AG04450 (cell line): ENCODE measurements at regions of chr1 and their contacts with region 1.

Region 1: DNA sequence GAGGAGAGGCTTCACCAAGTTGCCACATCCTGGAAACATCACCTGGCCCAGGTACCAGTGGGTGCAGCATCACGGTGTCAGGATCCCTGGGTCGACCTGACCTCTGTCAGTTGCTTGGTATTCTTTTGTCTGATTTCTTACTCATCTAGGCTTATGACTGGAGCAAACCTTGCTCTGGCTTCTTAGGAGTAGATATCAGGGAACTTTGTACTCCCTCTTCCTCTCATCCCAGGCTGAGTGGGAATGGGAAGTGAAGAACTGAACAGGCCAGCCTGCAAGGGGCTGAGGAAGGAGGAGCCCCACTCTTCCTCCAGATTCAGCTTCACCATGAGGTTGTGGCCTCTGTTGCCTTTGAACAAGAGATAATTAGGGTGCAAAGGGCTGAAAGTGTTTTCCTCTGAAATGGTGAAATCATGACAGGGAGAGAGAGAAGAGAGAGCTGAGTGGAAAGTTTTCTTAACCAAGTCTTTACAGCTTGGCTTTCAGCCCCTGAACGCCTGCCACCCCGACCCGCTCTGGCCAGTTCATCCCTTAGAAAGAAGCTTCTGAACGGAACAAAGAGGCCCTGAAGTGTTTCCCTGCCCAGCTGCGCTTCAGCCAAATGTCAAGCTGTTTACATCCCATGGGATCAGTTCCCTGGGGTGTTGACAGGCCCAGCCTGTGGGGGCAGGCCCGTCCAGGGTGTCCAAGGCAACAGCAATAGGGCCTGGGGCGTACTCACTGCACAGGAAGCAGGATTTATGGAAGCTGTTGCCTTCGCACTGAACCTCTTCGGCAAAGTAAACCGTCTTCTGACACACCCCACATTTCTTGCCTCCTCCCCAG is 11.2 kb downstream of the CSRP1 start:
- DNase-seq: no peak
- H3K4me3 ChIP-seq: peak overlapping the region; percentile 7; the same call in 1 of the 2 replicates
- H3K27ac ChIP-seq: peak overlapping the region; percentile 81
- H3K27me3 ChIP-seq: no peaks in the 10 kb centered on the region
- CTCF ChIP-seq: no peak

Region 2: DNA sequence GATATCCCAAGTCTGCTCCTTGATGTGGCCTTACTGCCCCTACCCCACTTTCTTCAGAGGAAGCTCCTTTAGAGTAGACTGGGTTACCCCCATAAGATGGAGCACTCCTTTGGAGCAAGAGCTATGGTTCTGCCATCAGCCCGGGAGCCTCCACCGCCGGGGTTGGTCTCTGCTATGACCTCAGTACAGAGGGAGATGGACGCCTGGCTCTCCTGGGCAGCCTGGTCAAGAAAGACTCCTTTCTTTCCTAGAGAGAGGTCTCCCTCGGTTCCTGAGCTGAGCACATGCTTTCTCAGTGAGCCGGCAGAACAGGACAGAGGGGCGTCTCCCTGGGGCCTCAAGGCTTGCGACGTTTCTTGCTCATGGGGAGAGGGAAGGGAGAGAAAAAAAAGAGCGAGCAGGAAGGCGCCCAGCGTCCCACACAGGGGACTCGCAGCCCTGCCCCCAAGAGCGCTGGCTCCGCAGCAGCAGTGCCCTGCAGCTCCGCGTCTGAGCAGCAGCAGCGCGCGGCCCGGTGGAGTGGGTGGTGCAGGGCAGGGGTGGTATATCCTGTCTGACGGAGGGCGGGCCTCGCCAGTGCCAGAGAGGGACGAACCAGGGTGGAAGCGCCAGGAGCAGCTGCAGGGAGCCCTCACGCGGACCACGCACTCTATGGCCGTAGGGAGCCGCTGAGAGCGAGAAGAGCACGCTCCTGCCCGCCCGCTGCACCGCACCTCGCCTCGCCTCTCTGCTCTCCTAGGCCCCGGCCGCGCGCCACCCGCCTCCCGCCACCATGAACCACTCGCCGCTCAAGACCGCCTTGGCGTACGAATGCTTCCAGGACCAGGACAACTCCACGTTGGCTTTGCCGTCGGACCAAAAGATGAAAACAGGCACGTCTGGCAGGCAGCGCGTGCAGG is 212.5 kb before region 1 on chr1 and contains the start of gene PKP1:
- CTCF ChIA-PET with region 1: no interaction called
- POLR2A ChIA-PET with region 1: no interaction called
- DNase-seq: no peak
- H3K4me3 ChIP-seq: peak within 1 kb of the TSS; percentile 37
- H3K27ac ChIP-seq: no peak within 1 kb of the TSS
- H3K27me3 ChIP-seq: peaks cover 52% of the 10 kb centered on the region
- CTCF ChIP-seq: no peak
- polyA plus RNA-seq, gene PKP1: 0.04 TPM in 2 replicates

Region 3: GRCh38 chr1:201476670-201477344 is 18.9 kb before region 1 on chr1:
- CTCF ChIA-PET with region 1: interaction called, 17 read pairs
- POLR2A ChIA-PET with region 1: interaction called, 10 read pairs
- DNase-seq: no peak
- H3K4me3 ChIP-seq: no peak overlapping the region
- H3K27ac ChIP-seq: no peak overlapping the region
- H3K27me3 ChIP-seq: no peaks in the 10 kb centered on the region
- CTCF ChIP-seq: no peak

Region 4: DNA sequence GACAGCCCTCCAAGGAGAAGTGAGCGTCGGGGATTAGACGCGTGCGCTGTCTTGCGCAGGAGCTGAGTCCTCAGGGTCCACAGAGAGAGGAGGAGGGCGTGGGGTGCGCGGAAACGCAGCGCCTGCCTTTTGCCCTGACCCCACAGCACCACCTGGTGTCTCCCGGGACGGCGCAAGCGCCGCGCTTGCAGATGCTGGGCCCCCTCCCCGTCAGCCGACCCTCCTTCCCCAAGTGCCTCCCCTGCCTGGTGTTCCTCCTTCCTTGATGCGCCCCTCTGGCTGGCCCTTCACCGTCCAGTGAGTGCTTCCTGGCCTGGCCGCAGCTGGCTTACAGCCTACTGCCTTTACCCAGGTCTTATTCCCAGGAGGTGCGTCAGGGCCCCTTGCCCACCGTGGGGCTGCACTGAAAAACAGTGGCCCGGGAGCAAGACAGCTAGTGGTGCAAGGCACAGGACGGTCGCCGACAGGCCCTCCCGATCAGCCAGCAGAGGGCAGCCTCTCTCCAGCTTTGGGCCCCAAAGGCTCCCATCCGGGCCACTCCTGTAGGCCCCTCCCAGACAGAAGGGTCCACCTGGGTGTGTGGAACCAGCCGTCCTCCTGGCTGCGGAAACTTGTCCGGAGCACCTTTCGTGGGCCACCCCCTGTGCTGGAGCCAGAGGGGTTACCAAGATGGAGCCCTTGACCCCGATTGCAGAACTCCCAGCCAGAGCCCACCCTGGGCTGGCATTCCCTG is 13.8 kb before region 1 on chr1:
- CTCF ChIA-PET with region 1: interaction called, 17 read pairs
- POLR2A ChIA-PET with region 1: interaction called, 22 read pairs
- DNase-seq: no peak
- H3K4me3 ChIP-seq: no peak overlapping the region
- H3K27ac ChIP-seq: no peak overlapping the region
- H3K27me3 ChIP-seq: no peaks in the 10 kb centered on the region
- CTCF ChIP-seq: peak; percentile 82